Endothelial cell of umbilical vein (primary cell): ENCODE measurements at regions of chr17 and their contacts with region 1.

Region 1: DNA sequence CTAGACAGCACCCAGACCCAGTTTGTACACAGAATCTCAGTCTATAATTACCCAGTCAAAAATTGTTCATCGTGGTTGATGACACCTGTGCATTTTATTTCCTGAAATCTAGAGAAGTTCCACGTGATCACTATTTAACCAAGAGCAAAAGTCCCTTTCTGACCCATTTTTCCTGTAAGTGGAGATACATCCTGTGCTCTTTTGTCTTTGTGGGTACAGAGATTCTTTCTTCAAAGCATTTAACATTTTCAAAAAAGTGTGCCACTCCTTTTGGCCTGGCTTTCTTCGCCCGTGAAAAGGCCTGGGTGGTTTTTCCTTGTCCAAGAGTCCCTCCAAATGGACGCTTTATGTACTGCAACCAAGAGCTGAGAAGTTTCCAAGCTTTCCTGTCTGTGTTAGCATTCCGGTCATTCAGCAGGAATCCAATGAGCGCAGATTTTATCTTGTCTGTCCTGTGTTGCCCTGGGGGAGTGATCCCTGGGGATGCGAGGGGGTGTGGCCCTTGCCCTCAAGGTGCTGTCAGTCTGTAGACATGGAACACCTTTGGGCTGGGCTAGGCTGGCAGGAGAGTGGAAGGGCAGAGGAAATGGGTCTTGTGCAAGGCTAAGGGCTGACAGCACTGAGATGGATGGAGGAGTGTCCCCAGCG is 161.1 kb upstream of the CACNG5 start:
- DNase-seq: peak; percentile 68
- H3K4me3 ChIP-seq: no peak overlapping the region
- H3K27ac ChIP-seq: no peak overlapping the region
- H3K4me1 ChIP-seq: peaks cover 2% of the 10 kb centered on the region
- H3K27me3 ChIP-seq: no peaks in the 10 kb centered on the region
- CTCF ChIP-seq: peak; percentile 64 to 74
- POLR2A ChIP-seq: no peak

Region 2: GRCh38 chr17:66200685-66201092 is 473.1 kb before region 1 on chr17:
- CTCF ChIA-PET with region 1: interaction called, 55 read pairs
- POLR2A ChIA-PET with region 1: interaction called, 3 read pairs
- dilution Hi-C with region 1: no loop called
- intact Hi-C with region 1: loop called (anchors 1 kb)
- DNase-seq: peak; percentile 79
- H3K4me3 ChIP-seq: no peak overlapping the region
- H3K27ac ChIP-seq: no peak overlapping the region
- H3K4me1 ChIP-seq: no peaks in the 10 kb centered on the region
- H3K27me3 ChIP-seq: no peaks in the 10 kb centered on the region
- CTCF ChIP-seq: peak; percentile 67 to 70
- POLR2A ChIP-seq: no peak

Region 3: DNA sequence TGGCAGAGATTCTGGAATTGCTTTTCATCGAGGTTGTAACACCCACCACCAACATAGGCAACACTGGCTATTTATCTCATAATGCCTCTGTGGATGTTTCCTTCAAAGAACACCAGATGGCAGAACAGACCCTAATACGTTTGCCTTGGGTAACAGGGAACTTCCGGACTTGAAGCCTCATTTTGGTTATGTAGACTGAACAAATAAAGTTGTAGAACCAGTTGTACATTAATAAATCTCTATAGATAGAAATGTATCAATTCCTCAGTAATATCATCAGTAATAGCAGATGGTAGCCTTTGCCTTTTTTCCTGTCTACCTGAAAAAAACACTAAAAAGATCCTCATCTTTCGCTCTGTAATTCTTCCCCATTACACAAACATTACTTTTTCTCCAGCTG is 418.7 kb before region 1 on chr17:
- CTCF ChIA-PET with region 1: interaction called, 47 read pairs
- POLR2A ChIA-PET with region 1: no interaction called
- dilution Hi-C with region 1: no loop called
- intact Hi-C with region 1: loop called (anchors 1 kb)
- DNase-seq: peak; percentile 74
- H3K4me3 ChIP-seq: no peak overlapping the region
- H3K27ac ChIP-seq: no peak overlapping the region
- H3K4me1 ChIP-seq: peaks cover 2% of the 10 kb centered on the region
- H3K27me3 ChIP-seq: no peaks in the 10 kb centered on the region
- CTCF ChIP-seq: peak; percentile 50 to 58
- POLR2A ChIP-seq: no peak

Region 4: DNA sequence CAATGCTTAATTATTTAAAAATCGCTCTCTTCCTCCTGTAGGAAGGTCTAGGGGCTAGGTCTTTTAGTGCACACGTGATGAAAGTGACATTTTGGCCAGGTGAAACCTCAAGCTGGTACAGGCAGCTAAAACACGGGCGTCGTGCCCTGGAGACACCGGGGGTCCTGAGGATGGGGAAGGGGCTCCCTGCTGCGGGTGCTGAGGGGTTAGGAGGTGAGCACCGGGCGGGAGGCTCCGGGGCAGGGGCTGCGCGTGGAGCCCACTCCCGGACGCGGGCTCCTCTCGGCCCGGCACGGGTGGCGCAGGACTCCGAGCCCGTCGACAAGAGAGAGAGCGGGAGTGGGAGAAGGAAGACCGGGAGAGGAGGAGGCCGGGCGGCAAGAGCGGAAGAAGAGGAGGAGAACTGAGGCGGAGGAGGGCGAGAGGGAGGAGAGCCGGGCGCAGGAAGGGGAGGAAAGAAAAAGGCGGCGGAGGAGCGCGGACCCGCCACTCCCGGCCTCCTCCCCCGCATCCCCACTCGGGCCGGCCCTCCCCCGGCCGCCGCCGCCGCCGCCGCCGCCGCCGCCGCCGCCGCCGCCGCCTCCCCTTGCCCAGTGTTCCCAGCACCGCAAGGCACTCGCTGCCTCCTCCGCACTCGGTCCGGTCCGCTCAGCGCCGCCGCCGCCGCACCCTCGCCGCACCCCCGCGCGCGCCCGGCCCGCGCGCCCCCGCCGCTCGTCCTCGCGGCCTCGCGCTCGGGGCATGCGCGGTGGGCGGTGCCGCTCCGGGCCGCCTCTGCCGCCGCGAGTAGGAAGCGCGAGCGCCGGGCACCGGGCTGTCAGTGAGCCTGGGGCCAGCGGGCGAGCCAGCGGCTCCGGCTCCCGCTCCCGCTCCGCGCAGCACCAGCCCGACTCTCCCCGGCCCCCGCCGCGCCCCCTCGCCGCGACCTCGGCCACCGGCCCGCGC is 371.7 kb before region 1 on chr17 and contains the start of gene PRKCA:
- CTCF ChIA-PET with region 1: interaction called, 4 read pairs
- POLR2A ChIA-PET with region 1: no interaction called
- dilution Hi-C with region 1: no loop called
- intact Hi-C with region 1: loop called (anchors 5 kb)
- DNase-seq: peak; percentile 52
- H3K4me3 ChIP-seq: peak within 1 kb of the TSS; percentile 76 to 90 (median 83)
- H3K27ac ChIP-seq: peak within 1 kb of the TSS; percentile 27
- H3K4me1 ChIP-seq: peaks cover 26% of the 10 kb centered on the region
- H3K27me3 ChIP-seq: no peaks in the 10 kb centered on the region
- CTCF ChIP-seq: no peak
- POLR2A ChIP-seq: peak; percentile 93
- total RNA-seq, gene PRKCA: 27.3 and 34.2 TPM in 2 replicates

Region 5: DNA sequence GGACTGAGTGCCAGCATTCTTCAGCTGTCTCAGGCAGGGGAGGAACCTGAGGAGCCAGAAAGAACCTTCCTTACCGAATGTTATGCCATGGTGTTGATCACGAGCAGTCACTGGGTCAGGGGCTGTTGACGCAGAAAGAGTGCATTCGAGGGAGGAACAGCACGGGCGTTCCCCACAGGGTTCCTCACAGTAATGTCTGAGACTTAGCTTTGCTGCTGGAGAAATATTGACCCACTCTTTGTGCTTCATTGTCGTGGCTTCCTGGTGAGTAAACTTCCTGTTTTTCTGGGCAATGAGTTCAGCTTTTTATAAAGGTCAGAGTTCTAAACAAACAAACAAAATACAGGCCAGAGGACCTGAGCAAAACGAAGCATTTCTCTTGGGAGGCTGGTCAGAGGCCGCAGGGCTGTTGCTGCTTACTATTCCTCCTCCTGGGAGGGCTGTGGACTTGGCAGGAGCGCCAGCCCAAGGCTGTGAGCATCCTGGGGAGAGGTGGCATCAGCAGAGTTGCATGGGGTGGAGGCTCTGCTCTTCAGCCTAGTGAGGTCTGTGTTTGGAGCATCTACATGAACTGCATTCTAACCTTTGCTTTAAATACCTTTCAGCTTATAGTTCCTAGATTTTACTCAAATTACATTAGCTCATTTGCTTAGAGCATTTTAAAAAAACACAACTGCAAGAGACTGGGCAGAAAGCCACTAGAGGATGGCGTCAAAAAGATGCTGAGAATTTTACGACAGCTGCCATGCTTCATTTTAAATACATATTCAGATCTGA is 18.0 kb after region 1 on chr17:
- CTCF ChIA-PET with region 1: interaction called, 18 read pairs
- POLR2A ChIA-PET with region 1: no interaction called
- dilution Hi-C with region 1: no loop called
- intact Hi-C with region 1: no loop called
- DNase-seq: peak; percentile 96
- H3K4me3 ChIP-seq: peak overlapping the region in 1 of 3 experiments; percentile 6
- H3K27ac ChIP-seq: peak overlapping the region; percentile 86
- H3K4me1 ChIP-seq: peaks cover 15% of the 10 kb centered on the region
- H3K27me3 ChIP-seq: no peaks in the 10 kb centered on the region
- CTCF ChIP-seq: no peak
- POLR2A ChIP-seq: peak; percentile 14

Region 6: DNA sequence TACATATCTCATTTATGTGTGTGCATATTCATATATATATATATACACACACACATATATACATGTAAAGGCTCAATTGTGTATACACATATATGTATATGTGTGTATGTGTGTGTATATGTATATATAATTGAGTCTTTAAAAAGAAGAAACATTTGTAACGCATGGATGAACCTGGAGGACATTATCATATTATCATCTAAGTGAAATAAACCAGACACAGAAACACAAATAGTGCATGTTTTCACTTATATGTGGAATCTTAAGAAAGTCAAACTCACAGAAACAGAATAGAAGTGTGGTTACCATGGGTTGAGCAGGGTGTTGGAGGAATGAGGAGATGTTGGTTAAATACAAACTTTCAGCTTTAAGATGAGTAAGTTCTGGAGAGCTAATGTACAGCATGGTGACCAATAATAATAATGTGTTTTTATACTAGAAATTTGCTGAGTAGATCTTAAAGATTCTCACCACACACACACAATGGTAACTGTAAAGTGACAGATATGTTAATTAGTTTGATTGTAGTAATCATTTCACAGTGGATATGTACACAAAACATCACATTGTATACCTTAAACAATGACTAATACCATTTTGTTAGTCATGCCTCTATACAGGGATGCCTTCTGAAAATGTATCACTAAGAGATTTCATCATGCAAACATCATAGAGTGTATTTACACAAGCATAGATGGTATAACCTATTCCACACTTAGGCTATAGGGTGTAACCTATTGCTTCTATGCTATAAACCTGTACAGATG is 28.5 kb after region 1 on chr17:
- CTCF ChIA-PET with region 1: no interaction called
- POLR2A ChIA-PET with region 1: no interaction called
- dilution Hi-C with region 1: no loop called
- intact Hi-C with region 1: no loop called
- DNase-seq: no peak
- H3K4me3 ChIP-seq: no peak overlapping the region
- H3K27ac ChIP-seq: no peak overlapping the region
- H3K4me1 ChIP-seq: no peaks in the 10 kb centered on the region
- H3K27me3 ChIP-seq: no peaks in the 10 kb centered on the region
- CTCF ChIP-seq: no peak
- POLR2A ChIP-seq: no peak

Region 7: GRCh38 chr17:66737524-66737923 is 63.7 kb after region 1 on chr17:
- CTCF ChIA-PET with region 1: no interaction called
- POLR2A ChIA-PET with region 1: no interaction called
- dilution Hi-C with region 1: no loop called
- intact Hi-C with region 1: no loop called
- DNase-seq: peak; percentile 33
- H3K4me3 ChIP-seq: no peak overlapping the region
- H3K27ac ChIP-seq: no peak overlapping the region
- H3K4me1 ChIP-seq: no peaks in the 10 kb centered on the region
- H3K27me3 ChIP-seq: no peaks in the 10 kb centered on the region
- CTCF ChIP-seq: peak; percentile 4 to 22
- POLR2A ChIP-seq: no peak